Activated CD8-positive, alpha-beta memory T cell treated with anti-CD3 and anti-CD28 coated beads, Interleukin-2, amount 10 ng/mL, durations not matched to agents 7 days and 5 days (primary cell): ENCODE measurements at regions of chr9 and their contacts with region 1.

Region 1: DNA sequence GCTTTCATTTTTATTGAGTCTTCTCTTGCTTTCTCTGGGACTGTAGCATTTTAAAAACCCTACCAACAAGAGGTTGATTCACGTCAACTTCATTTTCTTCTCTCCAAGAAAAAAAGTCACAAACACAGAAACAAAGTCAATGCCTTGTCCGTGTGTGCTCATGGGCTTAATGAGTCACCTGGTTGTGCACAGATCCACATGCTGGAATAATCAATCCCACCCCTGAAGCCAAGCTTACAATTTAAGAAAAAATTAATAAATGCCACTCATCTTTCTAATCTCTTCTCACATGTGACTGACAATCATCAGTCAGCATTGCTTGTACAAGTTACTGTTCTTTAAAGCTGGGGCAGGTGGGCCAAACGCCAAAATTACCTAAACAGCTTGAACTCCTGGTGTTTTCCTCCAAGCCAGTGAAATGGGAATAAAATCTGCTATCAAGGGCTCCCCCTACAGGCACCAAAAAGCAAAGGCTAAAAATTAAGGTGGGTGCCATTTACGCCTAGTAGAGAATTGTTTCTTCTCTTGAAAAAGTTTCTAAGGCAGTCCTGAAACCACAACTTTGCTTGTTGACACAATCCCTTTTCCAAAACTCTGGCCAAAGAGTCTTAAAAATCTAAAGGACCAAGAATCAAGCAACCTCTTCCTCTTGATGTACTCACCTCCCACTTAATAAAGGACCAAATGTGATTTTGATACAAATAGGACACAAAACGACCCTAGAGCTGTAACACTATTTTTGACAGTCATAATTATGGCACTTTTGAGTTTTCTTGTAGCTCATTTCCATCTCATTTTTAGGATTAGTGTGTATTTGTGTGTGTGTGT is 21.3 kb downstream of the TRMO start:
- DNase-seq: no peak
- ATAC-seq: no peak
- H3K4me3 Mint-ChIP-seq: no peak overlapping the region
- H3K27ac Mint-ChIP-seq: peak overlapping the region; percentile 27
- H3K4me1 Mint-ChIP-seq: peaks cover 35% of the 10 kb centered on the region
- H3K27me3 Mint-ChIP-seq: no peaks in the 10 kb centered on the region

Region 2: DNA sequence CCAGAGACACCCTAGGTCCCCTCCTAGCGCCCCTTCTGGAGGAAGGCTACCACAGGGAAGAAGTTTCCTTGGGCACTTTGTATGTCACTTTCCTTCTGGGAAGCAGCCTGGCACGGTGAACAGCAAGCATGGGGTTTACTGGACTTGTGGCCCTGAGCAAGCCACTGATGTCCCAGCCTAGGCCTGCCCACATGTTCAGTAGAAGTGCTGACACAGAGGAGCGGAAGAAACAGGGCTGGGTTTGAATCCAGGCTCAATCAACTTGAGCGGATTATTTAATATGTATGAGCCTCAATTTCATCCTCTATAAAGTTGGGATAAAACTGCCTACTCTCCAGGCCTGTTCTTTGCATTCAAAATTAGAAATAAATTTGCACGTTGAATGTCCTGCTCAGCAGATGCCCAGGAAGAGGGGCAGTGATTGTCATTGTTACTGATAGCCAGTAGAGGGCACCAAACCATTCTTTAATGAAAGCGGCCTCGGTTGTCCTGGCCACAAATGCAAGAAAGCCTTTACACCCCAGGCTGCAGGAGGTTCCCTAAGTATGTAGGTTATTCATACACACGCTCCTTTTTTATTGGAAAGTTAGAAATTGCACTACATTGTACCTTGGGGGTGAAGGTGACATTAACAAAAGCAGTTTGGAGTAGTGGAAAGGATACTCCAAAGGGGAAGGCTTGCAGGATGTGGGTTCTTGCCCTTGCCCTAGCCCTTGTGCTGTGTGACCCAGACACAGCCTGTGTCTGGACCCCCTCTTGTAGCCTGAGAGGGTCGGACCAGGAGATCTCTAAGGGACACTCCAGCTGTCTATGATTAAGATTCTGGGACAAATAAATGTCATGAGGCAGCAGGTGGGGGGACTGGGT is 190.4 kb before region 1 on chr9:
- CTCF ChIA-PET with region 1: interaction called, 19 read pairs
- DNase-seq: peak; percentile 59
- ATAC-seq: peak; percentile 90
- H3K4me3 Mint-ChIP-seq: no peak overlapping the region
- H3K27ac Mint-ChIP-seq: no peak overlapping the region
- H3K4me1 Mint-ChIP-seq: peaks cover 31% of the 10 kb centered on the region
- H3K27me3 Mint-ChIP-seq: peaks cover 33% of the 10 kb centered on the region

Region 3: DNA sequence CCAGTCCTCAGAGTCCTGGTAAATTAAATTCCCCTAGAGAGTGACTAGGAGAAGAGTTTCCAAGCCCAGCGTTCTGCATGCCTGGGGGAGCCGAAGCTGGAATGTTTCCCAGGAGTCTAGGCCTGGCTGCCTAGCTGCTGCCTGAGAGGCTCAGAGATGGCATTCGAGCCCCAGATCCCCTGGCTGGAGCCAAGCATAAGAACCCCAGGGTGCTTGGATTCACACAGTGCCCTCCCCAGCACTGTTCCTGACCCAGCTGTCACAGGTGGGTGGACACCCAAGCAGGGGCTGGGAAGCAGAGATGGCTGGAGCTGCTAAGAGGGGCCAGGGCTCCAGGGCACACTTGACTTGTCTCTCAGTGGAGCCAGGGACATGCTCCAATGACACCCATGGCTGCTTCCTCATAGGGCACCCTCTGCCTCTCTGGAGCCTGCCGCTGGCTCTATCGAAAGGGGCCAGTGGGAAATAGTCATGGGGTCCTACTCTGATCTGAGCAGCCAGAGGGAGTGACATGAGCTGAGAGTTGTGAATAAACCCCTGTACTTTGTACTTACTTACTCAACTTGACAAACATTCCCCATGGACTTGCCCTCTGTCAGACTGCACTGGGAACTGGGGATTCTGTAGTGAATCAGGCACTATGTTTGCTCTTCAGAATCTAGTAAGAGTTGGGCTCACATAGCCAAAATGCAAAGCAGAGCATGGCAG is 141.2 kb before region 1 on chr9:
- CTCF ChIA-PET with region 1: no interaction called
- DNase-seq: no peak
- ATAC-seq: no peak
- H3K4me3 Mint-ChIP-seq: no peak overlapping the region
- H3K27ac Mint-ChIP-seq: no peak overlapping the region
- H3K4me1 Mint-ChIP-seq: no peaks in the 10 kb centered on the region
- H3K27me3 Mint-ChIP-seq: peaks cover 40% of the 10 kb centered on the region

Region 4: DNA sequence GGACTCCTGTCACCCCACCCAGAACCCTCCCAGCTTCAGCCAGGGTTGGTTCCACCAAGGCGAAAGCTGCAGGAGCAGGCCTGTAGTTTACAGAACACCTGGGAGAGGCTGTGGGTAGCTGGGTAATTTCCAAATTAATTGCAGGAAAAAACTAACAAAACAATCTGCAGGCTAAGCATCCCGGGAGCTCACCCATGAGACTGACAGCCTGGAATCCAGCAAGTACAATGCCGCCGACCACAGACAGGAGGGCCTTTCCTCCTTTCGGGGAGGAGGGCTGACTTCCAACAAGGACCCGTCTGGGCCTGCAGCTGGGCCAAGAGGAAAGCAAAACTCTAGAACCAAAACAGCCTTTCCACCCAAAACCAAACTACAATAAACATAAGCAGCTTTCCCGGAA is 37.6 kb before region 1 on chr9:
- CTCF ChIA-PET with region 1: interaction called, 11 read pairs
- DNase-seq: no peak
- ATAC-seq: no peak
- H3K4me3 Mint-ChIP-seq: no peak overlapping the region
- H3K27ac Mint-ChIP-seq: no peak overlapping the region
- H3K4me1 Mint-ChIP-seq: peaks cover under 1% of the 10 kb centered on the region
- H3K27me3 Mint-ChIP-seq: peaks cover 77% of the 10 kb centered on the region

Region 5: GRCh38 chr9:97890038-97890437 is 10.9 kb before region 1 on chr9:
- CTCF ChIA-PET with region 1: interaction called, 134 read pairs
- DNase-seq: peak; percentile 71
- ATAC-seq: peak; percentile 65
- H3K4me3 Mint-ChIP-seq: no peak overlapping the region
- H3K27ac Mint-ChIP-seq: no peak overlapping the region
- H3K4me1 Mint-ChIP-seq: no peaks in the 10 kb centered on the region
- H3K27me3 Mint-ChIP-seq: no peaks in the 10 kb centered on the region